AG04449 (cell line): ENCODE measurements at regions of chr20 and their contacts with region 1.

Region 1: DNA sequence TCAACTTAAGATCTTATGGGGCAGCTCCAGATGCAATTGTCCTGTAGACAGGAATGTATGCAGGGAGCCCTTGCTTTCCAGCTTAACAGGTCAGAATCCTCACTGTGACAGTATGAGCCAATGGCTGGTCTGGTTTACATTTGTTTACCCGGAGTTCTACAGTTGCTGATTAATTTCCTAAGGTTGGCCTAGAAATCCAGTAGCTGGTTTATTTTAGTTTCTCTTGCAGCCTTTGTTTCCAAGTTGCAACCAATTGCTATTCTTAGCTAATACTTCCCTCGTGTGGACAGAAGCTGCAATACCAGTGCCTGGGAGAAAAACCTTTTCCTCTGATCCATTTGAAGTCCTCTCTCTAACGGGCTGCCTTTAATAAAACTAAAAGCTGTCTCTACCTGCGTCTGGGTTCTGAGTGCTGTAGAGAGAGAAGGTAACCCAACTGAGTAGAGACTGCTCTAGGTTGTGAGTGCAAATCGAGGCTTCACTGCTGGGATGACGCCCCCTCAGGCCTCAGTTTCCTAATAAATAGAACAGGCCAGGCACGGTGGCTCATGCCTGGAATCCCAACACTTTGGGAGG is 45.9 kb downstream of the ZNF217 start:
- DNase-seq: peak; percentile 29
- H3K4me3 ChIP-seq: no peak overlapping the region
- CTCF ChIP-seq: peak; percentile 63

Region 2: DNA sequence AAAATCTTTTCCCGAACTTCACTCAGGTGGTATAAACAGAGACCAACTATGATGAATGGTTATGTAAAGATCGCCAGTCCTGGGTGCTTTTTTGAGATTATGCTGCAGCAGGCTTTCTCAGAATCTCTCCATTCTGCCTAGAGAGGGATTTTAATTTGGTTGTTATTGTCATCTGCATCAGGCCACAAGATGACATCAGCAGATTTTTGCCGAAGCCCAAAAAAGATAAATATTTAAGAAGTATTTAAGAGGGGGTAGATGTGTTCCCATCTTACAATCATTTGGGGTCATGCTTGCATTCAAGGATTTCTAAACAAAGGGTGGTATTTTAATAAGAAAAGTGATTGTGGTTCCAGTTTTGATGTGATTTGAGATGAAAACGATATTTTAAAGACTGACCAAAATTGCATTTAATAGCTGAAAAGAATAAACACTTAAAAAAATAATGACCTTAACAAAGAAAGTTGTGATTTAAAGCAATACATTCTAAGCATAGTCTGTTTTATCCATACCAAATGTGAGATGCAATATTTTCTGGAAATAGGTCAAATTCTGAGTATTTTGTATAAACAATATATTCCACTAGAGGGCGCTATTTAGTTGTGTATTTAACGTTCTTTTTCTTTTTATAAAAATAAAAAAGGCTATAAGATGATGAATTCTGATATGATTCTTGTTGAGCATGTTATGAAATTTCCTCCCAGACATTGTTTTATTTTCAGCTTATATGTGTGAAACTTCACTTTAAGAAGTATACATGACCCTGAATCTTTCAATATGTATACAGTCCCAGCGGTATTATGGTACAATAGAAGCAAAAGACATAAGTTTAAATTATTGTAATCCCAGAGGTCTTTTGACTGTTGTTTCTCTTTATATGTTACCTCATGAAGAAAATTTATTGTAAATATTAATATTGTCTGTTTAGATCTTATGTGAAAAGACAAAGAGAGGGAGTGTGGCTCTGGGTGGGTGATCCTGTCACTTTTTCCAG is 1305.2 kb before region 1 on chr20:
- CTCF ChIA-PET with region 1: interaction called, 16 read pairs
- POLR2A ChIA-PET with region 1: no interaction called
- DNase-seq: no peak
- H3K4me3 ChIP-seq: no peak overlapping the region
- CTCF ChIP-seq: no peak

Region 3: GRCh38 chr20:53157443-53158408 is 390.0 kb before region 1 on chr20:
- CTCF ChIA-PET with region 1: interaction called, 30 read pairs
- POLR2A ChIA-PET with region 1: no interaction called
- DNase-seq: no peak
- H3K4me3 ChIP-seq: no peak overlapping the region
- CTCF ChIP-seq: peak; percentile 65

Region 4: DNA sequence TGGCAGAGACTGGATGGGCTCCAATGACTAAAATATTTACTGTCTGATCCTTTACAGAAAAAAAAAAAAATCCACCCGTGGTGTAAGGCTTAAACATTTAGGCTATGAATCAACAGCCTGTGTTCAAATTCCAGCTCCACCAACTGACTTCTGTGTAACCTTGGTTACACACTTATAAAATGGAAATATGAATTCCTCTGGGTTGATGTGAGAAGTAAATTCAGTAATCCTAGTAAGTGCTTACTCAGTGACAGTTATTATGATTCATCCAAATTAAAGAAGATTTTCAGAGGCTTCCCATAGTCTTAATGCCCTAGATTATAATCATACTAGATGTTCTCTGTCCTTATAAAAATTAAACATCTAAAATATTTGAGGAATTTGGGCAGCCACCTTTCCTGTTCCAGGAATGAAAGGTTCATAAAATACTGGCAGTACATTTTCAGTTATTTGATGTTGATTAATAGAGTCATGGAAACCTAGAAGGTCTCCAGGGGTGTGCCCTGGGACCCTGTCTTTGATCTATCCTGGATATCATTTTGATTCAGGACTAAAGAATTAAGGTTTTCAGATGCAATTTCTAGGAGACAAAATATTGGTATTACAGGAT is 226.1 kb after region 1 on chr20:
- CTCF ChIA-PET with region 1: no interaction called
- POLR2A ChIA-PET with region 1: no interaction called
- DNase-seq: peak; percentile 97
- H3K4me3 ChIP-seq: no peak overlapping the region
- CTCF ChIP-seq: no peak